ENCODE measurements at regions of chr4 and their contacts with region 1.

Region 1: GRCh38 chr4:119314356-119314755 is 7.6 kb downstream of the FABP2 start:
- DNase-seq: peak; percentile 61
- H3K4me3 Mint-ChIP-seq: no peak overlapping the region
- H3K27ac Mint-ChIP-seq: no peak overlapping the region
- H3K4me1 Mint-ChIP-seq: no peaks in the 10 kb centered on the region
- H3K27me3 Mint-ChIP-seq: peaks cover 22% of the 10 kb centered on the region
- CTCF ChIP-seq: peak; percentile 49

Region 2: GRCh38 chr4:119300101-119300978 is 14.0 kb before region 1 on chr4:
- CTCF ChIA-PET with region 1: interaction called, 10 read pairs
- POLR2A ChIA-PET with region 1: interaction called, 3 read pairs
- intact Hi-C with region 1: no loop called
- DNase-seq: peak; percentile 92
- H3K4me3 Mint-ChIP-seq: peak overlapping the region; percentile 93
- H3K27ac Mint-ChIP-seq: peak overlapping the region; percentile 97
- H3K4me1 Mint-ChIP-seq: peaks cover 12% of the 10 kb centered on the region
- H3K27me3 Mint-ChIP-seq: no peaks in the 10 kb centered on the region
- CTCF ChIP-seq: no peak

Region 3: GRCh38 chr4:119490335-119490734 is 176.0 kb after region 1 on chr4:
- CTCF ChIA-PET with region 1: interaction called, 15 read pairs
- POLR2A ChIA-PET with region 1: interaction called, 3 read pairs
- intact Hi-C with region 1: loop called (anchors 1 kb)
- DNase-seq: peak; percentile 7
- H3K4me3 Mint-ChIP-seq: no peak overlapping the region
- H3K27ac Mint-ChIP-seq: no peak overlapping the region
- H3K4me1 Mint-ChIP-seq: no peaks in the 10 kb centered on the region
- H3K27me3 Mint-ChIP-seq: no peaks in the 10 kb centered on the region
- CTCF ChIP-seq: no peak

Region 4: DNA sequence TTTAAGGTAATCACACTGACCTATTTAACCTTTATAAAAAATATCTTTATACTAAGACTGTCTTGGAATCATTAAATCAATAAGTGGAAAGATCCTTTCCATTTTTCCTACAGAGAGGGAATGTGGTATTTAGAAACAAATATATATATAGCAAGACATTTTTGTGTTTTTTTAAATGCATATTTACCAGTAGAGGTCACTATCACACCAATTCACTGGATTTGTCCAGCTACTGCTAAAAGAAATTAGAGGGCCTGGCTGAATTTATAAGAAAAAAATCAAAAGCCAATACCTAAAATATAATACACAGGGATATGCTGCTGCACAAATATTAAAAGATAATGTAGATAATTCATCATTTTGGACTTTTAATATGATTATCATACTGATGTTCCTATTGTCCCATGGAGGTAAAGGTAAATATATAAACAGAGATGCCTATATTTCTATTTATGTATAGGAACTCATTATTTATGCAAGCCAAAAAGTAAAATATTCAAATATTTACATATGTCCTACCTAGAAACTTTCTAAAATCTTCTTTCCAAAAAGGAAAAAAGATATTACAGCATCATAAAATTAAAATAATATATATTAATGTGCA is 244.8 kb after region 1 on chr4:
- CTCF ChIA-PET with region 1: no interaction called
- POLR2A ChIA-PET with region 1: no interaction called
- intact Hi-C with region 1: loop called (anchors 1 kb)
- DNase-seq: peak; percentile 56
- H3K4me3 Mint-ChIP-seq: no peak overlapping the region
- H3K27ac Mint-ChIP-seq: no peak overlapping the region
- H3K4me1 Mint-ChIP-seq: no peaks in the 10 kb centered on the region
- H3K27me3 Mint-ChIP-seq: no peaks in the 10 kb centered on the region
- CTCF ChIP-seq: peak; percentile 43

Region 5: DNA sequence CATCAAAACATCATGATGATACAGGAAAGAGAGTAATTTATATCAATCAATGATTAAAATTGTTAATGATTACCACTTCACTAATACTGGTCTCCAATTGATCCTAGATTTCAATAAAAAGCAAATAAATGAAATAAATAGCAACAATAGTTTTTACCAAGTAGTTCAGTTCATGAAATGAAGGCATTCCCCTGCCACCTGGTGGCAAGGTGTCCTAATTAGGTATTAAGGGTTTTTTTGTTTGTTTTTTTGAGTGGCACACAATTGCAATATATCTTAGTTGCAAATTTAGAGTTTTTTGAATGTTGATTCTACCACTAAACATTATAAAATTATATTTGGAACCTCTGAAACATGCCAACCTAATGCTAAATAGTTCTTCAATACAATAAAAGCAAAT is 471.6 kb after region 1 on chr4:
- CTCF ChIA-PET with region 1: interaction called, 4 read pairs
- POLR2A ChIA-PET with region 1: no interaction called
- intact Hi-C with region 1: loop called (anchors 2 kb)
- DNase-seq: peak; percentile 41
- H3K4me3 Mint-ChIP-seq: no peak overlapping the region
- H3K27ac Mint-ChIP-seq: no peak overlapping the region
- H3K4me1 Mint-ChIP-seq: no peaks in the 10 kb centered on the region
- H3K27me3 Mint-ChIP-seq: no peaks in the 10 kb centered on the region
- CTCF ChIP-seq: peak; percentile 44

Region 6: DNA sequence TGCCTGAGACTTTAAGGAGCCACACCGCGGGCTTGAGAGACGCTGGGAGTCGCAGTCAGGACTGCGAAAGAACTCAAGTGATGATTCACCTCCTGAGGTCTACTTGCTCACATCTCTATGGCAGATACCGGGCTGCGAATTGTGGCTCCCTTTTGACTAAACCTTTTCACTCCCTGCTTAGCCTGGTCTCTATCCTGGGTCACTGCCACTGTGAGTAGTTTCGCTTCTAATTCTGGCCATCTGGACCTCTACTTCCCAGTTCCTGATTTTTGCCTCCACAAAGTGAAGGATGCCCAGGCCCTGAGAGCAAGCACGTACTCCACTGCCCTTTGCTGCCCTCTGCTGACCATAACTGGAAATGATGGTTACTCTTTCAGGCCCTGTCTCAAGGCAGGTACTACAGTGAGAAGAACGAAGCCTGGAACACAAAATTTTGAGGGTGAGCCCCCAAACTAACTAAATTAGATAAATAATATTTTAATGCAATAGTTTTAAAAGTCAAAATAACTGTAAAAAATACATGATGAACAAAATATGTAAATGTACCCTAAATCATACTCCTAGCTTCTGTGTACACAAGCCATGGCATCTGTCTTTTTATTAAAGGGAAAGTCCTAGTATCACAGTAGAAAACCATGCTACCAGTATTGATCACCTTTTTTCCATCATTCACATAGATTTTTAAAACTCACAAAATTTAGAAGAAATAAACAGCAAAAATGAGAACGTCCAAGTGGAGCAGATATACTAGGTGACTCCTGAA is 735.6 kb after region 1 on chr4:
- CTCF ChIA-PET with region 1: interaction called, 7 read pairs
- POLR2A ChIA-PET with region 1: no interaction called
- intact Hi-C with region 1: loop called (anchors 1 kb)
- DNase-seq: peak; percentile 84
- H3K4me3 Mint-ChIP-seq: no peak overlapping the region
- H3K27ac Mint-ChIP-seq: no peak overlapping the region
- H3K4me1 Mint-ChIP-seq: peaks cover 13% of the 10 kb centered on the region
- H3K27me3 Mint-ChIP-seq: no peaks in the 10 kb centered on the region
- CTCF ChIP-seq: peak; percentile 73

Region 7: GRCh38 chr4:120056246-120056645 is 741.9 kb after region 1 on chr4:
- CTCF ChIA-PET with region 1: interaction called, 12 read pairs
- POLR2A ChIA-PET with region 1: no interaction called
- intact Hi-C with region 1: no loop called
- DNase-seq: no peak
- H3K4me3 Mint-ChIP-seq: no peak overlapping the region
- H3K27ac Mint-ChIP-seq: no peak overlapping the region
- H3K4me1 Mint-ChIP-seq: peaks cover 8% of the 10 kb centered on the region
- H3K27me3 Mint-ChIP-seq: no peaks in the 10 kb centered on the region
- CTCF ChIP-seq: peak; percentile 7

Measured in MCF 10A (cell line).